ENCODE measurements at regions of chr22 and their contacts with region 1.

Region 1: DNA sequence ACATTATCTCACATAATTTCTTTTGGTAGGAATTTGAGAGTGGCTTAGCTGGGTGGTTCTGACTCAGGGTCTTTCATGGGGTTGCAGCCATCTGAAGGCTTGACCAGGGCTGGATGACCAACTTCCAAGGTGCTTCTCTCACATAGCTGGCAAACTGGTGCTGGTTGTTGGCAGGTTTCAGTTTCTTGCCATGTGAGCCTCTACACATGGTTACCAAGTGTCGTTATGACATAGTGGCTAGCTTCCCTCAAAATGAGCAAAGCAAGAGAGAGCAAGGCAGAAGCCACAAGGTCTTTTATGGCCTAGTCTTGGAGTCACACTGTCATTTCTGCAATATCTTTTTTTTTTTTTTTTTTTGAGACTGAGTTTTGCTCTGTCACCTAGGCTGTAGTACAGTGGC is 4.2 kb upstream of the TFIP11 start:
- DNase-seq: peak in 1 of 3 donors; percentile 7
- H3K4me3 ChIP-seq: no peak overlapping the region
- H3K27ac ChIP-seq: no peak overlapping the region
- H3K4me1 ChIP-seq: peaks cover 8 to 16% (median 16%) of the 10 kb centered on the region in 4 experiments
- H3K27me3 ChIP-seq: no peaks in the 10 kb centered on the region

Region 2: GRCh38 chr22:26182723-26183122 is 333.8 kb before region 1 on chr22:
- CTCF ChIA-PET with region 1: no interaction called
- POLR2A ChIA-PET with region 1: interaction called, 12 read pairs
- DNase-seq: no peak
- H3K4me3 ChIP-seq: no peak overlapping the region
- H3K27ac ChIP-seq: no peak overlapping the region
- H3K4me1 ChIP-seq: no peaks in the 10 kb centered on the region
- H3K27me3 ChIP-seq: peaks cover 0 to 10% (median 4%) of the 10 kb centered on the region in 5 experiments